Naive thymus-derived CD8-positive, alpha-beta T cell (primary cell): ENCODE measurements at regions of chr16 and their contacts with region 1.

Region 1: DNA sequence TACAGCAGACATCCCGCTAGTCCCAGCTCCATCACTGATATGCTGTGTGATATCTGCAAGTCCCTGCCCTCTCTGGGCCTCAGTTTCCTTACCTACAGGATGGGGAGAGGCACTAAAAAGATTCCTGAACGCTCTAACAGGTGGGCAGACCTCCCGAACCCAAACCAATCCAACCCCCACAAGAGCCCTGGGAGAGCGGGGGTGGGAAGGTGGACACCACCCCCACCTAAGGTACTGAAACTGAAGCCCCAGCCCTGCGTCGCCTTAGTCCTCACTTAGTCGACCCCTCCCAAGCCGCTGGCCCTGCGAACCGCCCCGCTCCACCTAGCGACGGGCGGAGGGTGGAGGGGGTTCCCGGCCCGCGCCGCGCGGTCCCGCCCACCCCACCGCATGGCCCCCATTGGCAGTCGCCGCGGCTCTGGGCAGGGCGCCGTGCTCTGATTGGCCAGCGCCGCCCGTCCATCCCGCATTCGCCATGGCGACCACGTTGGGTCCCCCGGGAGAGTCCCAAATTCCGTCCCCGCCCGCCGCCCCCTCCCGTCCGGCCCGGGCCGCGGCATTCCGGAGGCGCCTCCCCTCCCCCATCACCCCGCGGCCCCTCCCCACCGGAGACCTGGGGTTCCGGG is 578 bp downstream of the CCDC102A start:
- DNase-seq: peak; percentile 85 to 95 (median 90)
- ATAC-seq: peak; percentile 82 to 85
- H3K4me3 Mint-ChIP-seq: peak overlapping the region; percentile 73 to 90 (median 82)
- H3K27ac Mint-ChIP-seq: peak overlapping the region; percentile 90 to 99 (median 94)
- H3K4me1 Mint-ChIP-seq: peaks cover 49 to 86% (median 77%) of the 10 kb centered on the region in 4 donors
- H3K27me3 Mint-ChIP-seq: no peaks in the 10 kb centered on the region

Region 2: DNA sequence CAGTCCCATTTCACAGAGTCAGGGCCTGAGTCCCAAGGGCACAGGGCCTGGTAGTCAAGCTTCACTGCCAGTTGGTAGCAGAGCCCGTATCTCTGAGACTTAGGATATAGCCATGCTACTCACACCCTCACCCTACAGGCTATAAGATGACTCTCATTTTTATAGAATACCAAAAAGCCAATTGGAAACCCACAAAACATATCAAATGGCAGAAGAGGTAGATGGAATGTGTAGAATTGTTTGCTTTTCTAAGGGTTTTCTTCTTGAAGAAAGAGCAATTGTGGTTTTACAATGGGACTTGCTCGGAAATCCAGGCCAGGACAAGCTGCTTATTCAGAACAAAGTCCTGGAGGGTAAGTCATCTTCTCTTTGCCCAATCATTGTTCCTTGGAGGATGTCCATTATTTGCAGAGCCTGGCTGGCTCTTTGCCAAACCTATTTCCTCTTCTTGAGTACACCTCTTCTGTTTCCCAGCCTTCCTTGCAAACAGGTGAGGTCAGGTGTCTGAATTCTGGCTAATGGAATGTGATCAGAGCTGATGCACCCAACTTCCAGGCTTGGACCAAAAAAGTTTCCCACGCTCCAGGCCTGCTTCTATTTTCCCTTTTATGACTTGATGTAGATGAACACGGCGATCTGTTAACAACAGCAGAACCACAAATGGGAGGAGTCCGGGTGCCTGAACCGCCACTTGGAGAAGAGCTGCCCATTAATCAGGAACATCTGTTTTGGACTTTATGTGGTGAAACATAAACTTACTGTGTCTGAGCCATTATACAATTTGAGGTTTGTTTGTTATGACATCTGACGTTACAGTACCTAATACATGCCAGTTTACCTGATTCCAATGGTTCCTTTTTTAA is 194.1 kb before region 1 on chr16:
- POLR2A ChIA-PET with region 1: no interaction called
- DNase-seq: no peak
- ATAC-seq: no peak
- H3K4me3 Mint-ChIP-seq: no peak overlapping the region
- H3K27ac Mint-ChIP-seq: no peak overlapping the region
- H3K4me1 Mint-ChIP-seq: peaks cover 13 to 35% (median 18%) of the 10 kb centered on the region in 4 donors
- H3K27me3 Mint-ChIP-seq: peaks cover 9 to 62% (median 39%) of the 10 kb centered on the region in 5 donors

Region 3: GRCh38 chr16:57485916-57486857 is 49.6 kb before region 1 on chr16 and contains the start of gene DOK4:
- POLR2A ChIA-PET with region 1: interaction called, 42 read pairs
- DNase-seq: peak; percentile 57 to 84 (median 69)
- ATAC-seq: peak; percentile 92 to 96
- H3K4me3 Mint-ChIP-seq: peak within 1 kb of the TSS; percentile 83 to 94 (median 88)
- H3K27ac Mint-ChIP-seq: peak within 1 kb of the TSS; percentile 35 to 88 (median 74)
- H3K4me1 Mint-ChIP-seq: peaks cover 19 to 31% (median 22%) of the 10 kb centered on the region in 4 donors
- H3K27me3 Mint-ChIP-seq: no peaks in the 10 kb centered on the region
- polyA plus RNA-seq, gene DOK4: 1.8 to 4.7 (median 3.1) TPM

Region 4: GRCh38 chr16:57519796-57520360 is 15.9 kb before region 1 on chr16:
- POLR2A ChIA-PET with region 1: interaction called, 13 read pairs
- DNase-seq: peak; percentile 65 to 91 (median 81)
- ATAC-seq: peak; percentile 99 to 100
- H3K4me3 Mint-ChIP-seq: no peak overlapping the region
- H3K27ac Mint-ChIP-seq: peak overlapping the region in 4 of 10 donors; percentile 8 to 69 (median 65)
- H3K4me1 Mint-ChIP-seq: peaks cover 8 to 22% (median 10%) of the 10 kb centered on the region in 4 donors
- H3K27me3 Mint-ChIP-seq: no peaks in the 10 kb centered on the region